ENCODE measurements at regions of chr21 and their contacts with region 1.

Region 1: DNA sequence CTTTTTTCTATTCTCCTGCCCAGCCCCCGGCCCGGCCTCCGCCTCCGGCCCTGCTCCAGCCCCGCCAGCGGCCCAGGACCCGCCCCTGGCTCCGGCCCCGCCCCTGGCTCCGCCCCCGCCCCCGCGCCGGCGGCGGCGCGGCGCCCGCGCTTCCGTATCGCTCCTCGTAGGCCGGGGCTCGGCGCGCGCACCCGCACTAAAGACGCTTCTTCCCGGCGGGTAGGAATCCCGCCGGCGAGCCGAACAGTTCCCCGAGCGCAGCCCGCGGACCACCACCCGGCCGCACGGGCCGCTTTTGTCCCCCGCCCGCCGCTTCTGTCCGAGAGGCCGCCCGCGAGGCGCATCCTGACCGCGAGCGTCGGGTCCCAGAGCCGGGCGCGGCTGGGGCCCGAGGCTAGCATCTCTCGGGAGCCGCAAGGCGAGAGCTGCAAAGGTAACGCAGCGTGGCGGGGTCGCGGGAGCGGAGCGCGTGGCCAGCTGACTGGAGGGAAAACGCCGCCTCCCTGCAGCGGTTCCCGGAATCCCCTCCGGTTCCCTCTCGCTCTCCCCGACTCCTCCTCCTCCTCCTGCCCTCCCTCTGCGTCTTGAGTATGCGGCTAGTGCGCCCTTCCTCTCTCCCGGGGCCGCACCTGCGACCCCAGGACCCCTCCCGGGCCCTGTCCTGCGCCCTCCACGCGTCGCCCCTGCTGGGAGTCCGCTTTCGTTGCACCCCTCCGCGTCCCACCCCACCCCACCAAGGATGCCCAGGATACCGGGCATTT is at the start of gene IFNAR2:
- DNase-seq: peak; percentile 94
- total RNA-seq, gene IFNAR2: 26.7 to 31.3 TPM

Region 2: GRCh38 chr21:33348706-33349105 is 118.7 kb after region 1 on chr21:
- intact Hi-C with region 1: loop called in 1 of 2 experiments (anchors 10 kb)
- DNase-seq: no peak